ENCODE measurements at regions of chr17 and their contacts with region 1.

Region 1: GRCh38 chr17:48131216-48131824 is 23.8 kb downstream of the SNX11 start:
- DNase-seq: no peak
- H3K4me3 ChIP-seq: no peak overlapping the region
- H3K27ac ChIP-seq: no peak overlapping the region
- H3K4me1 ChIP-seq: peaks cover 0 to 19% (median 3%) of the 10 kb centered on the region in 3 donors
- H3K27me3 ChIP-seq: no peaks in the 10 kb centered on the region
- CTCF ChIP-seq: peak; percentile 59 to 83 (median 79)
- POLR2A ChIP-seq: no peak

Region 2: GRCh38 chr17:48074315-48075081 is 56.8 kb before region 1 on chr17:
- intact Hi-C with region 1: loop called (anchors 5 kb)
- DNase-seq: no peak
- H3K4me3 ChIP-seq: no peak overlapping the region
- H3K27ac ChIP-seq: peak overlapping the region in 2 of 4 donors; percentile 15 to 36
- H3K4me1 ChIP-seq: peaks cover 0 to 10% (median 0%) of the 10 kb centered on the region in 3 donors
- H3K27me3 ChIP-seq: no peaks in the 10 kb centered on the region
- CTCF ChIP-seq: peak; percentile 56 to 91 (median 86)
- POLR2A ChIP-seq: no peak

Region 3: GRCh38 chr17:48344246-48344645 is 212.9 kb after region 1 on chr17:
- intact Hi-C with region 1: no loop called
- DNase-seq: no peak
- H3K4me3 ChIP-seq: no peak overlapping the region
- H3K27ac ChIP-seq: no peak overlapping the region
- H3K4me1 ChIP-seq: no peaks in the 10 kb centered on the region
- H3K27me3 ChIP-seq: peaks cover 0 to 68% (median 7%) of the 10 kb centered on the region in 4 donors
- CTCF ChIP-seq: no peak
- POLR2A ChIP-seq: no peak